Activated CD8-positive, alpha-beta T cell treated with anti-CD3 and anti-CD28 coated beads, Interleukin-2, amount 10 ng/mL, durations not matched to agents 7 days and 5 days (primary cell): ENCODE measurements at regions of chr19 and their contacts with region 1.

Region 1: DNA sequence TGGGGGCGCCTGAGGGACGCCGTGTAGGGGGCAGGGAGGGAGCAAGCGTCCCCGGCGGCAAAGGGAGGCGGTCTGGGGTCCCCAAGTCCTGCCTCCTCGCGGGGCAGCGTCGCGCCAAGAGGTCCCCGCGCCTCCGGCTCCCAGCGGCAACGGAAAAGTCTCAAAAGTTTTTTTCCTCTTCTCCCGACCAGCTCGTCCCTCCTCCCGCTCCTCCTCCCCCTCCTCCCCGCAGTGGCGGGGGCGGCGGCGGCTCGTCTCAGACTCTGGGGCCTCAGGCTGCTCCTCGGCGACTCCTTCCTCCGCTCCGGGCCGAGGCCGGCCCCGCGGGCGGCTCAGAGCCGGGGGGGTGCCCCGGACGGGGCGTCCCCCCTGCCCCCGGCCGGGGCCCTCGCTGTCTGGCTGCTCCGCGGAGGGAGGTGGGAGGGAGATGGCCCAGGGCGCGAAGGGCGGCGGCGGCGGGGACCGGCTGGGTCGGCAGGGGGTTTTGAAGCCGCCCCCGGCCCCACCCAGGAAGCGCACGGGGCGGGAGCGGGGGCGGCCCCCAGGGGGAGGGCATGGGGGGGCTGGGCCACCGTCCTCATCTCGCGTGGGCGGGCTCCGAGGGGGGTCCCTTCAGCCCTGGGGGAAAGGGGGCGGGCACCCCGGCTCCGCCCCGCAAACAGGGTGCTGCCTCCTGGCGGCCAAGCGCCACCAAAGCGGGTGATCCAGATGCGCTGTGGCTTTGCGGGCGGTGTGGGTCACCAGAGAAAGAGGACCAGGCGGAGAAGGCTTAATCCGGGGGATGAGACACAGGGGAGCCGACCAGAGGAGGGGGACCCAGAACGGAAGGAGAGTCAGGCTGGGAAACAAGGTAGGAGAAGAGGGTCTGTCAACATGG is at the start of gene TGFB1:
- DNase-seq: peak; percentile 95
- ATAC-seq: peak; percentile 54
- H3K4me3 Mint-ChIP-seq: peak within 1 kb of the TSS; percentile 90
- H3K27ac Mint-ChIP-seq: peak within 1 kb of the TSS; percentile 98
- H3K4me1 Mint-ChIP-seq: peaks cover 66% of the 10 kb centered on the region
- H3K27me3 Mint-ChIP-seq: no peaks in the 10 kb centered on the region
- total RNA-seq, gene TGFB1: 210 to 231 TPM

Region 2: DNA sequence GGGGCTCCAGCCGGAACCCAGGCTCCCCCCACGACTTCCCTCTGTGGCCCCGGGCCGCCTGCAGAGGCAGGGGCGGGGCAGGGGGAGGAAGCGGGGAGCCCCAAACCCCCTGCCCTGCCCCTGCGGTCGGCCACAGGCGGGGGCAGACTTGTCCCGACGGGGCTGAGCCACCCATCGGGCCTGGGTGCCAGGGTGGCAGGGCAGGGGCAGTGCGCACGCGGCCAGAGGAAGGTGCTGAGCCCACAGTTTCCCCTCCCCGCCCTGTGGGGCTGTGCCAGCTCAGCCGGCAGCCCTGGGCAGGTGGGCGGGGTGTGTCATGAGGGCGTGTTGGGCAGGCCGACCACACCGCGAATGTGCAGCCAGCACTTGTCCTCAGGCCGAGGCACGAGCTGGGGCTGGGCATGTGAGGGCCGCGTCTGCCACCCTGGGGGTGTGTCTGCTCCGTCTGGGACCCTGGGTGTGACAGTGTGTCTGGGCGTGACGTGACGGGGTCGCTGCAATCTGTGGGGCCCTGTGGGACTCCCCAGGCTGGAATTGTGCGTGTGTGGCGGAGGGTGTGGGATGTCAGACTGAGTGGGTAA is 26.0 kb before region 1 on chr19:
- CTCF ChIA-PET with region 1: interaction called, 12 read pairs
- POLR2A ChIA-PET with region 1: interaction called, 22 read pairs
- DNase-seq: peak; percentile 84
- ATAC-seq: peak; percentile 66
- H3K4me3 Mint-ChIP-seq: peak overlapping the region; percentile 64
- H3K27ac Mint-ChIP-seq: peak overlapping the region; percentile 94
- H3K4me1 Mint-ChIP-seq: peaks cover 75% of the 10 kb centered on the region
- H3K27me3 Mint-ChIP-seq: no peaks in the 10 kb centered on the region

Region 3: DNA sequence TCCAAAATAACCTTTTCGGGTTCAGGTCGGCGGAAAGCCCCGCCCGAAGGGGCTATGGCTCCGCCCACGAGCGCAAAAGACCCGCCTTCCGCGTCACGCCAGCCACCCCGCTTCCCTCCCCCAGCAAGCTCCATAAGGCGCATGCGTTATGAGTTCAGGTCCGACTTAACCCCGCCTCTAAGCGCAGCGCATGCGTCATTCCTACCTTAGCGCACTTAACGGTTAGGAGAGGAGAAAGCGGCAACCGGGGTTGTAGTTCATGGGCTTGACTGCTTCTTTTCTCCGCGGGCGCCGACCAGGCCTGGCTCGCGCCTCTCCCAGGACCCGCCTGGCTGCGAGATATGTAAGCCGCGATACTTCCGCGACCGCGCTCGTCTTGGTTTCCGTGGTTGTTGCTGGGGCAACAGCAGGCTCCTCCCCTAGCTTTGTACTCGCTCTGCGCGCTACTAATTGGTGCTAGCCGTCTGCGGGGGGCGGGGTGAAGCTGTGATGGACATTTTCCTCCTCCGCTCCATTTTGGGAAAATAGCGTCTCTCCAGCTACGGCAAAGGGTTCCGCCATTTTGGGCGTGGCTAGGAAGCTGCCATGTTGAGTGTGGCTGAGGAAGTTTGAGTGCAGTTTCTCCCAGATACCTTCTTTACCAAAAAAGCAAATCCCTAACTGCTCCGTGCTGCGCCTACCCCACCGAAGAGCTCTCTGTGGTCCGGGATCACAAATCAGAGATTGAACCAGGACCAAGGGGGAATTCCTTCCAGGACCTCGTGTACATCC is 10.2 kb after region 1 on chr19 and contains the start of gene B9D2:
- CTCF ChIA-PET with region 1: interaction called, 35 read pairs
- POLR2A ChIA-PET with region 1: interaction called, 27 read pairs
- DNase-seq: peak; percentile 99
- ATAC-seq: peak; percentile 96
- H3K4me3 Mint-ChIP-seq: peak within 1 kb of the TSS; percentile 93
- H3K27ac Mint-ChIP-seq: peak within 1 kb of the TSS; percentile 99
- H3K4me1 Mint-ChIP-seq: peaks cover 37% of the 10 kb centered on the region
- H3K27me3 Mint-ChIP-seq: no peaks in the 10 kb centered on the region
- total RNA-seq, gene B9D2: 10.6 to 12.8 TPM